Spleen (tissue), 13 donors: ENCODE measurements at regions of chr9 and their contacts with region 1.

Region 1: DNA sequence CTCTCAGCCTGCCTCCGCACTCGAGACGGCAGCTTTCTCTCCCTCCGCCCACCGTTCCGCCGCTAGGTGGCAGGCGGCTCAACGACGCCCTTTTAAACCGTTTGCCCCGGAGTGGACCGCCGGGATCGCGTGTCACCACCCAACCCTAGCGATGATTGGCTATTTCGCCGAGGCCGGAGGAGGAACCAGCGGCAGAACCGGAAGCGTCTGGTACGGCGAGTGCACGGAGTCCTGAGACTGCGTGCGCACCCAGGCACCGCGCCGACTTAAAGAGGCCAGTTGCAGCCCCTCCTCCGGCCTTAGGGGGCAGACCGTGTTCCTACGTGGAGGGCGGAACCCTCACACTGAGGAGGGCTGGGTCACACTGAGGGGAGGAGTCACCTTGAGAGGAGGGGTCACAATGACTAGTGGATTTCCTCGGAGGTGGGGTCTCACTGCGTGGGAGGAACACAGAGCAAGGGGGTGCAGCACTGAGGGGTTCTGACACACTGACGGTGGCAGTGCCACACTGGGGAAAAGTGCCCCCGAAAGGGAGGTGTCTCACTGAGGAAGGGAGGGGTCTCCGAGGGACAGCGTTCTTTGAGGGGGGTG is 980 bp upstream of the TESK1 start:
- DNase-seq: peak; percentile 100
- H3K4me3 ChIP-seq: peak overlapping the region; percentile 40 to 93 (median 76)
- H3K27ac ChIP-seq: peak overlapping the region; percentile 67 to 96 (median 90)
- H3K4me1 ChIP-seq: peaks cover 12 to 54% (median 42%) of the 10 kb centered on the region in 6 donors
- H3K27me3 ChIP-seq: no peaks in the 10 kb centered on the region
- CTCF ChIP-seq: peak; percentile 96 to 99 (median 98)
- POLR2A ChIP-seq: peak in 1 of 3 donors; percentile 34

Region 2: DNA sequence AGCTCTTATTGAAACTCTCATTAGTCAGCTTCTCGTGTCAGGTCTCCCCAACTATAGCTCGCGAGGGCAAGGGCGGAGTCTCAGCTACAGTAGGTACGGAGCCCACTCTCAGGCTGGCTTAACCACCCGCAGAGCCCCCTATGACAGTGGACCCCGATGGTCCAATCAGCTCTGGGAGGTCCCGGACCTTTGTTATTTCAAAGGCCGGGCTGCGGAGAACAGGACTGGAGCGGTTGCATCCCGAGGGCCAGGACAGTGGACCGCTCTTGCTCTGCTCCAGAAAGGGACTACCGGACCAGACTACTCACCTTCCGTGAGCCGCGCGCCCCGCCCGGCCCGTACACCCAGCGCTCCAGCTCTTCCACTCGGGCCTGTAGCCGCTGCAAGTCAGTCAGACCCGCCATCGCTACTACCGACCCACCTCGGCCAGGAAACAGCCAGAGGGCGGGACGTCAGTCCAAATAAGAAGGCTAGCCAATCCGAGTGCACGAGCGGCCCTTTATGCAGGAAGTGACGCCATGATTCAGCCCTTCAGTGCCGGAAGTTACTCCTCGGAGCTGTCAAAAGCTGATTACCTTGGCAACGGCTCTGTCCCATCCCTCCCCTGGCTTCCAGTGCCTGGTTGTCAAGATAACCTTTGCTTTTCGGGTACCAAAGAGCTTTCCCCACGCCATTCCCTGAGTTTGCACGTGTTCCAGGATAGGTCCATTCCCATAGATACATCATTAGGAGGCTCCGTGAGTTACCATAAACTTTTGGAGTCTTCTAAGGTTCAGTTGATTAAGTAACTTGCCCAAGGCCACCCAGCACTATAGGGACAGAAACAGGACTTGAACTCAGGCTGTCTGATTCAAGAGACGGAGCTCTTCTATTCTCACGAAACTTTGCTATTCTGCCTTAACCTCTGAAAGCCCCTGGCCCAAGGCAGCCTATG is 983.8 kb before region 1 on chr9 and contains the start of gene DCTN3:
- intact Hi-C with region 1: no loop called
- DNase-seq: peak; percentile 97
- H3K4me3 ChIP-seq: peak within 1 kb of the TSS; percentile 52 to 96 (median 78)
- H3K27ac ChIP-seq: peak within 1 kb of the TSS in 7 of 8 donors; percentile 4 to 83 (median 71)
- H3K4me1 ChIP-seq: peaks cover 5 to 45% (median 31%) of the 10 kb centered on the region in 6 donors
- H3K27me3 ChIP-seq: peaks cover 10 to 40% (median 33%) of the 10 kb centered on the region in 7 donors
- CTCF ChIP-seq: no peak
- POLR2A ChIP-seq: no peak
- total RNA-seq, gene DCTN3: 43.8 to 64.1 (median 52.1) TPM

Region 3: GRCh38 chr9:35664531-35665470 is 60.7 kb after region 1 on chr9 and contains the start of gene ARHGEF39:
- intact Hi-C with region 1: loop called (anchors 10 kb)
- DNase-seq: peak; percentile 92
- H3K4me3 ChIP-seq: peak within 1 kb of the TSS; percentile 34 to 81 (median 58)
- H3K27ac ChIP-seq: peak within 1 kb of the TSS in 7 of 8 donors; percentile 62 to 97 (median 76)
- H3K4me1 ChIP-seq: peaks cover 25 to 70% (median 58%) of the 10 kb centered on the region in 6 donors
- H3K27me3 ChIP-seq: no peaks in the 10 kb centered on the region
- CTCF ChIP-seq: peak in 2 of 11 experiments; percentile 16 to 19
- POLR2A ChIP-seq: no peak
- total RNA-seq, gene ARHGEF39: 0.95 to 2.8 (median 1.4) TPM

Region 4: DNA sequence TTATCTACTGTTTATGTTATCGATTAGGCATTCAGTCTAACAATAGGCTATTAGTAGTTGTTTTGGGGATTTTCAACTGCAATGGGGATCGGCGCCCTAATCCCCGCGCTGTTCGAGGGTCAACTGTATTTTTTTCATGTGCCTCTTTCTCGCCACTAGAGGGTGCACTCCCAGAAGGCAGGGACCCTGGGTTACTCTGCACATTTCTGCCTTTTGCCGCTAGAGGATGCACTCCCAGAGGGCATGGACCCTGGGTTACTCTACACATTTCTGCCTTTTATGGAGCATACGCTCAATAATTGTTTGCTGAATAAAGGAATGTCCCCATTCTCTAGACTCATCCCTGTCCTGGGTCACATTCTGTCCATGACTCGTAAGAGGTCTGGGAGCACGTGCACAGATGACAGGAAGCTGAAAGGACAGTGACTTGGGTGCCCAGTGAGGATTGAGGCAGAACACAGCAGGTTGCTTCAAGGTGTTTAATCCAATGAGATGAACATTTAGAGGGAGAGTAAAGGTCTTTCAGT is 404.8 kb after region 1 on chr9:
- intact Hi-C with region 1: no loop called
- DNase-seq: no peak
- H3K4me3 ChIP-seq: no peak overlapping the region
- H3K27ac ChIP-seq: no peak overlapping the region
- H3K4me1 ChIP-seq: peaks cover 0 to 26% (median 10%) of the 10 kb centered on the region in 6 donors
- H3K27me3 ChIP-seq: peaks cover 0 to 5% (median 0%) of the 10 kb centered on the region in 7 donors
- CTCF ChIP-seq: peak; percentile 38 to 96 (median 87)
- POLR2A ChIP-seq: no peak